Activated B cell treated with CpG ODN at 0.5 μM for 24 hours (primary cell): ENCODE measurements at regions of chr6 and their contacts with region 1.

Region 1: DNA sequence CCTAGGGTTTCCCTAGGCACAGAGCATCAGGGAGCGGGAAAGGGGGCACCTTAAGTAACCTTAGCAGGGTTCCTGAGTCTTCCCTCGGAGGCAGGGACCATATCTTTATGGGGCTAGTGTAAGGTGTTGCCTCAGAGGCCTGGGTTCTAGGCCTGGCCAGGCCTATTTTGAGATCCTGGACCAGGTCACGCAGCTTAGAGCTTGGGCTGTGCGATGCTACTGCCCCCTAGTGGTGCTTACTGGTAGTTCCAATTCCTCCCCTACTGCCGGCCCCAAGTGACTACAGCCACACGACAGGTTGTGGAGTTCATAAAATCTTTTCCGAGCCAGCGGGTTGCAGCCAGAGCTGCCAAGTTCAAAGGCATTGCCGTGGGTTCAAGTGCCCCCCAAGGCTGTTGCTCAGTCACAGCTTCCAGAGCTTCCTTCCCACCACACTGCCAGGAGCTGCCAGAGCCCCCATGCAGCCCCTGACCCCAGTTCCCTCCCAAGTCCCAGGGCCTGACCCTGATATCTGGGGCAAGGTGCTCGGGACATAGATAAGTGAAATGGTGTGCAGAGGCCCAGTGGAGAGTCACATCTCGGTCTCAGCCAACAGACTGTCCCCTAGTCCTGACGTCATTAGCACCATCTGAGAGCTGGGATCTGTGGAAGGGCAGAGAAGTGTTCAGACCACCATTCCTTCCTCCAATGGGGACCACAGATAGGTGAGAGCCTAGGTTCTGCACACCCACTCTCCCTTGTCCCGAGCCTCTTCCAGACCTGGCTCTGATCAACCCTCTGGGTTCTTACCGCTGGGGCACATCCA is 3.3 kb downstream of the LRRC73 start:
- DNase-seq: peak; percentile 67
- ATAC-seq: peak; percentile 60
- H3K4me3 Mint-ChIP-seq: no peak overlapping the region
- H3K27ac Mint-ChIP-seq: no peak overlapping the region
- H3K4me1 Mint-ChIP-seq: peaks cover 19% of the 10 kb centered on the region
- H3K27me3 Mint-ChIP-seq: peaks cover 9% of the 10 kb centered on the region
- CTCF ChIP-seq: peak; percentile 53

Region 2: DNA sequence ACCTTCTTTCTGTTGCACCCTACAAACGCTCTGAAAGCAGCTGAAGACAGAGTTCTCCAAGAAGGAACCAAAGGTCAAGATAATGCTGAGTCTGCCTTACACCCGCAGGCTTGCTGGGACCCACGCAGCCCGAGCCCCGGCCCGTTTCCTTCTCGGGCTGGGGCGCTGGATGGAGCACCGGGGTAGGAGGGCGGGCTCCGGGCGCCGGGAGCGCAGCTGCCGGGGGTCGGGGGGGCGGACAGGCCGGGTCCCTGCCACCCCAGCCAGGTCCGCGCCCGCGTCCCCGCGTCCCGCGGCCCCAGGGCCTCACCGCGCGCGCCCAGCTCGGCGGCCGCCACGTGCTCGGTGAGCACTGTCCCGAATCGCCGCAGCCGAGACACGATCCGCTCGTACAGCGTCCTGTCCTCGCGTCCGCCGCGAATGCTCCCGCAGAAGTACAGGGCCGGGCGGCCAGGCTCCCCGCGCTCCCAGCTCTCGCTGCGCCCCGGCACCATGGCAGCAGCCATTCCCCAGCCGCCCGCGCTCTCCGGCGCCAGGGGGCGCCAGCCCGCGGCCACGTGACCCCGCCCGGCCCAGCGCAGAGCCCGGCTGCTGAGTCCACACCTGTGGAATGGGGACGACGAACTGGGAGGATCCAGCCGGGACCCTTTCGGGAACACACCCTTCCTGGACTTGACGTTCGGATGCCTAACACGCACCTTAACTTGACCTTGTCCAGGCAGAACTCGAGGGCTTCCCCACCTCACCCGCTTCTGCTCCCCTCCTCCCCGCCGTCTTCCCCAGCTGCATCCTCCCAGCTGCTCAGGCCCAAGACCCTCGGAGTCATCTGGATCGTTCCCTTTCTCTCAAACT is 277.7 kb before region 1 on chr6 and contains the start of gene DNPH1:
- CTCF ChIA-PET with region 1: interaction called, 7 read pairs
- POLR2A ChIA-PET with region 1: interaction called, 4 read pairs
- intact Hi-C with region 1: loop called (anchors 1 kb)
- DNase-seq: peak; percentile 87
- ATAC-seq: peak; percentile 69
- H3K4me3 Mint-ChIP-seq: peak within 1 kb of the TSS; percentile 87
- H3K27ac Mint-ChIP-seq: peak within 1 kb of the TSS; percentile 75
- H3K4me1 Mint-ChIP-seq: peaks cover 39% of the 10 kb centered on the region
- H3K27me3 Mint-ChIP-seq: no peaks in the 10 kb centered on the region
- CTCF ChIP-seq: peak; percentile 57
- total RNA-seq, gene DNPH1: 56.7 and 57.5 TPM in 2 replicates

Region 3: DNA sequence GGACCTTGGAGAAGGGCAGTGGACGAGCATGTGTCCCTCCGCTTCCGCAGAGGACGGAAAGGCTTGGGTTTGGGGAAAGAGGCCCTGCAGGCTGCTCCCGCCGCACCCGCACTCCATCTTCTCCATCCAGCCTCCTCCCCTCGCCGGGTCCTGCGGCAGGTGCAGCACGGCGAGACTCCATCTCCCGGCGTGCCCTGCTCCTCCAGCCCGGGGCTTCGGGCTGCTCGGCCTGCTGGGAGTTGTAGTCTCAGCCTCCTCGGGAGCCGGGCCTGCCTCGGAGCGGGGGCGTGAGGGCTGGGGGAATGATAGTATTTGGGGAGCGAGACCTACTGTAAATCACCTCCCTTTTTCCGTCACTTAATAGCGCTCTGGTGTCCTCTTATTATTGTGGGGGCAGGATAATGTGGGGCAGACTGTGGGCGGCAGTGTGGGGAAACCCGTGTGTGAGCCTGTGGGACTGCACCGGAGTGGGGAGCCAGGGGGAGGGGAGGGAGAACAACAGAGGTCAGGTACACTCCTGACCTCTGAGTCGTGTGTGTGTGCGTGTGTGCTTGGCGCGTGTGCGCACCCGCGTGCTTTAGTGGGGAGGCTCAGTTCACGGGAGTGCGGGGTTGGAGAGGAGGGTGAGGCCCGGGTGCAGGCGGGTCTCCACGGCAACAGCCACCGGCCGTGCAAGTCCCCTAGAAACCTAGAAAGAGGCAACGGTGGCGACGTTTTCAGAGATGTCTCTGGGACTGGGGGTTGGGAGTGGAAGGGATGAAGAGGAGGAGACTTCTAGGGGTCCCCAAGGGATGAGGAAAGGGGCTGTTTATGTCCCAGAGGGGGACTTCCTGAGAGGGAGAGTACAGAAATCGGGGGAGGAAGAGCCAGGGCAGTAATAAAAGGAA is 259.5 kb before region 1 on chr6:
- CTCF ChIA-PET with region 1: no interaction called
- POLR2A ChIA-PET with region 1: no interaction called
- intact Hi-C with region 1: loop called (anchors 5 kb)
- DNase-seq: peak; percentile 73
- ATAC-seq: peak; percentile 96
- H3K4me3 Mint-ChIP-seq: no peak overlapping the region
- H3K27ac Mint-ChIP-seq: peak overlapping the region; percentile 76
- H3K4me1 Mint-ChIP-seq: peaks cover 29% of the 10 kb centered on the region
- H3K27me3 Mint-ChIP-seq: peaks cover 17% of the 10 kb centered on the region
- CTCF ChIP-seq: no peak

Region 4: DNA sequence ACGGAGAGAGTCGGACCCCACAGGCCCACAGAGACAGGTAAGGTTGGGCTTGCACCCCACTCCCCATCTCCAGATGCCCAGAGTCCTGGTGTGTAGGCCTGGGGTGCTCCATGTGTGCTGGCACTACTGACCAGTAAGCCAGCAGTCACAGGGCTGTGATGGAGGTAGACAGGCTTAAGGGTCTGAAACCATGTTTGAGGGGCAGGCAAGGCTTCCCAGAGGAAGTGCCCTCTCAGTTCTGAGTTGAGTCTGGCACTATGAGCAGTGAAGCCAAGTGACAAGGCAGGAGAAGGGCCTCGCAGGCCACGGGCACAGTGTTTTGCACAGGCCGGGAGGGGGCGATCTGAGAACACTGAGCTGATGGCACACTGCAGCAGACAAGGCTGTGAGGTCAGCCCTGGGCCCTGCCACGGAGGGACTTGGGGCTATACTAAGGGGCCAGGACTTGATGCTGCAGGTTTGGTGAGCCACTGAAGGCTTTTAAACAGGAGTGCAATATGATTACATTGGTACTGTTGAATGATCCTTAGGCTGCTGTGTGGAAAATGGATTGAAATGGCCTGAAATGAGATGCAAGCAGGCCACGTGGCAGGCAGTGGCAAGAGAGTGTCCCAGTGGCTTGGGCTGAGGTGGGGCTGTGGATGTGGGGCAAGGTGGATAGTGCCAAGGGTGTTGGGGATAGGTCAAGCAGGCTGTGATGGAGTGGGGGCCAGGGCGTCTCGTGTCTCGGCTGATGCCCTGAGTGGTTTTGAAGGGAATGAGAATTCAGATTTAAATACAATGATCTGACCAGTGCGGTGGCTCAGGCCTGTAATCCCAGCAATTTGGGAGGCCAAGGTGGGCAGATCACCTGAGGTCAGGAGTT is 243.3 kb before region 1 on chr6:
- CTCF ChIA-PET with region 1: interaction called, 10 read pairs
- POLR2A ChIA-PET with region 1: interaction called, 3 read pairs
- intact Hi-C with region 1: loop called (anchors 1 kb)
- DNase-seq: peak; percentile 72
- ATAC-seq: peak; percentile 100
- H3K4me3 Mint-ChIP-seq: no peak overlapping the region
- H3K27ac Mint-ChIP-seq: peak overlapping the region; percentile 12
- H3K4me1 Mint-ChIP-seq: peaks cover 6% of the 10 kb centered on the region
- H3K27me3 Mint-ChIP-seq: no peaks in the 10 kb centered on the region
- CTCF ChIP-seq: peak; percentile 27

Region 5: GRCh38 chr6:43454696-43455530 is 52.0 kb before region 1 on chr6:
- CTCF ChIA-PET with region 1: interaction called, 33 read pairs
- POLR2A ChIA-PET with region 1: interaction called, 15 read pairs
- intact Hi-C with region 1: loop called (anchors 1 kb)
- DNase-seq: peak; percentile 72
- ATAC-seq: peak; percentile 49
- H3K4me3 Mint-ChIP-seq: peak overlapping the region; percentile 85
- H3K27ac Mint-ChIP-seq: no peak overlapping the region
- H3K4me1 Mint-ChIP-seq: peaks cover 16% of the 10 kb centered on the region
- H3K27me3 Mint-ChIP-seq: no peaks in the 10 kb centered on the region
- CTCF ChIP-seq: no peak

Region 6: GRCh38 chr6:43516697-43517504 is 10.0 kb after region 1 on chr6 and contains the starts of genes POLR1C and YIPF3:
- CTCF ChIA-PET with region 1: interaction called, 13 read pairs
- POLR2A ChIA-PET with region 1: interaction called, 15 read pairs
- intact Hi-C with region 1: no loop called
- DNase-seq: peak; percentile 87
- ATAC-seq: peak; percentile 94
- H3K4me3 Mint-ChIP-seq: no peak within 1 kb of the TSS
- H3K27ac Mint-ChIP-seq: peak within 1 kb of the TSS; percentile 54
- H3K4me1 Mint-ChIP-seq: peaks cover 29% of the 10 kb centered on the region
- H3K27me3 Mint-ChIP-seq: no peaks in the 10 kb centered on the region
- CTCF ChIP-seq: no peak
- total RNA-seq, gene POLR1C: 67.7 and 75.6 TPM in 2 replicates
- total RNA-seq, gene YIPF3: 51.7 and 59.1 TPM in 2 replicates

Region 7: GRCh38 chr6:44074439-44075136 is 567.7 kb after region 1 on chr6:
- CTCF ChIA-PET with region 1: no interaction called
- POLR2A ChIA-PET with region 1: no interaction called
- intact Hi-C with region 1: loop called (anchors 2 kb)
- DNase-seq: peak; percentile 56
- ATAC-seq: peak; percentile 60
- H3K4me3 Mint-ChIP-seq: peak overlapping the region; percentile 66
- H3K27ac Mint-ChIP-seq: peak overlapping the region; percentile 7
- H3K4me1 Mint-ChIP-seq: peaks cover 20% of the 10 kb centered on the region
- H3K27me3 Mint-ChIP-seq: peaks cover 30% of the 10 kb centered on the region
- CTCF ChIP-seq: peak; percentile 21